Keratinocyte (primary cell): ENCODE measurements at regions of chr19 and their contacts with region 1.

Region 1: DNA sequence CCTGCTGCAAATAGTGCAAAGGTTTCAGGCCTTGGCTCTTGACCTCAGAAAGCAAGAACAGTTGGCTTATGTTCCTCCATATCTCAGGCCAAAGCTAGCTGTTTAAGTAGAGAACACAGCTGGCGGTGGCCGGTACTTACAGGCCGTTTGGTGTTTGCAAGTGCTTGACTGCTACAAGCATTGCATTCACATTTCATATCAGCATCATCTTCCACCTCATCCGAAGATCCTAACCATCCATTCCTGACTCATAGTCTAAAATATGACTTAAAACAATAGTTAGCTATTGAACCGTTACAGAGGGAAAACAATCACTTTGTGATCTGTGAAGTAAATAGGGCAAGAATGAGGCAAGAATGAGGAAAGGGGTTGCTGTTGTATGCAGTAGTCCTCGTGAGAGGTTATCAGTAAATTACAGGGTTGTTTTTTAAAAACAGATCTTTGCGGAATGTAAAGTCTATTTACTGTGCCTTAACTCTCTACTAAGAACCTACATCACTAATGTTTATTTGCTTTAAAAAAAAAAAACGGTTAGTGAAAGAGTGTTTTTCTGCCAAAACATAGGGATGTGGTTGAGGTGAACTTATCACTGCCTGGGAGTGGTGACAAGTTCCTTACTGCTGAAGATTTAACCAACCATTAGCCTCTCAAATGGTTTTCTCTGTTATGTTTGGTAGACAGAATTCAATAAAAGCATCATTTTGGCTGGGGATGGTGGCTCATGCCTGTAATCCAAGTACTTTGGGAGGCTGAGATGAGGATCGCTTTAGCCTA is 21.6 kb upstream of the WDR88 start:
- DNase-seq: no peak
- H3K4me3 ChIP-seq: no peak overlapping the region
- H3K27ac ChIP-seq: no peak overlapping the region
- H3K4me1 ChIP-seq: no peaks in the 10 kb centered on the region
- H3K27me3 ChIP-seq: no peaks in the 10 kb centered on the region
- CTCF ChIP-seq: no peak

Region 2: GRCh38 chr19:32988724-32989123 is 121.6 kb before region 1 on chr19:
- dilution Hi-C with region 1: loop called (anchors 10 kb)
- DNase-seq: no peak
- H3K4me3 ChIP-seq: no peak overlapping the region
- H3K27ac ChIP-seq: no peak overlapping the region
- H3K4me1 ChIP-seq: no peaks in the 10 kb centered on the region
- H3K27me3 ChIP-seq: no peaks in the 10 kb centered on the region
- CTCF ChIP-seq: no peak

Region 3: DNA sequence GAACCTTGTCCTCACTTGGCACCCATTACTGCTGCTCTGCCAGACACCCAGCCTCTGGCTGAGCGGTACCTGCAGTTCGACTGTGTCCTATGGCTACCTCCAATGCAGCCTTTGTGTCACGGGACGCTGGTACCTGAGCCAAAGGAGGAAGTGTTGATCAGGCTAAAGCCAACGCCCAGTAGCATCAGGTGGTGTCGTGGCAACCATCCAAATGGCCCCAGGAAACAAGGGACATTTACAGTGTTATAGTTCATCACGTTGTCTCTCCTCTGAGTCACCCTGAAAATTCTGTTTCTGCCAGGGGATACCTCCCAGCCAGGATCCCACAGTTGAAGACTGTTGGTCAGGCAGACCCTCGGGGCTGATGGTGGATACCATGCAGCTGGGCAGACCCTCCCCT is 55.7 kb before region 1 on chr19:
- dilution Hi-C with region 1: no loop called
- DNase-seq: no peak
- H3K4me3 ChIP-seq: no peak overlapping the region
- H3K27ac ChIP-seq: no peak overlapping the region
- H3K4me1 ChIP-seq: peaks cover 10% of the 10 kb centered on the region
- H3K27me3 ChIP-seq: no peaks in the 10 kb centered on the region
- CTCF ChIP-seq: no peak